Right ventricle myocardium inferior (tissue), 1 donor: ENCODE measurements at regions of chr5 and their contacts with region 1.

Region 1: DNA sequence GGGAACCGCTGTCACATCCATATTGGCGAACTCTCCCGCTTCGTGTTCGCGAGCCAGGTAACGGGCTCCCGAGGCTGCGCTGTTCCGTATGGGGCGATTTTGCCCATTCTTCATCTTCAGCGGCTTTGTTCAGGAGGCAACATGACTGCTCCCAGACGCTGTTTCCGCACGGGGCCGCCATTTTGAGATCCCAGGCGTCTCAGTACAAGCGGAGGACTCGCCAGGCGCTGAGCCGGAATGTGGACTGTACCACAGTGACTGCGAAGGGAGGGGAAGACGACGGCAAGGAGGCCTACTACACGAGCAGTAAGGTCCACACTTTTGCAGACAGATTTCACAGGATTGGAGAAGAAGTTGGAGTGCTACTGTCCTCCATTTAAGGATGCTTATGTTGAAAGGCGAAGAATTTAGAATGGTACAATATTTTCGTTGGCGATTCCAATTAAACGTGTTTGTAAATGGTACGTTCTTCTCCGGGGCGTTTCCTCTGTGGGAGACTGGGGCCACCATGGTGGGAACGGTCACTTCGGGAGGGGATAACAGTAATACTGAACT is 41.6 kb upstream of the ZNF300 start:
- DNase-seq: peak; percentile 90
- ATAC-seq: peak; percentile 98

Region 2: GRCh38 chr5:149834246-149834855 is 1112.1 kb before region 1 on chr5:
- intact Hi-C with region 1: no loop called
- DNase-seq: no peak
- ATAC-seq: peak; percentile 37

Region 3: DNA sequence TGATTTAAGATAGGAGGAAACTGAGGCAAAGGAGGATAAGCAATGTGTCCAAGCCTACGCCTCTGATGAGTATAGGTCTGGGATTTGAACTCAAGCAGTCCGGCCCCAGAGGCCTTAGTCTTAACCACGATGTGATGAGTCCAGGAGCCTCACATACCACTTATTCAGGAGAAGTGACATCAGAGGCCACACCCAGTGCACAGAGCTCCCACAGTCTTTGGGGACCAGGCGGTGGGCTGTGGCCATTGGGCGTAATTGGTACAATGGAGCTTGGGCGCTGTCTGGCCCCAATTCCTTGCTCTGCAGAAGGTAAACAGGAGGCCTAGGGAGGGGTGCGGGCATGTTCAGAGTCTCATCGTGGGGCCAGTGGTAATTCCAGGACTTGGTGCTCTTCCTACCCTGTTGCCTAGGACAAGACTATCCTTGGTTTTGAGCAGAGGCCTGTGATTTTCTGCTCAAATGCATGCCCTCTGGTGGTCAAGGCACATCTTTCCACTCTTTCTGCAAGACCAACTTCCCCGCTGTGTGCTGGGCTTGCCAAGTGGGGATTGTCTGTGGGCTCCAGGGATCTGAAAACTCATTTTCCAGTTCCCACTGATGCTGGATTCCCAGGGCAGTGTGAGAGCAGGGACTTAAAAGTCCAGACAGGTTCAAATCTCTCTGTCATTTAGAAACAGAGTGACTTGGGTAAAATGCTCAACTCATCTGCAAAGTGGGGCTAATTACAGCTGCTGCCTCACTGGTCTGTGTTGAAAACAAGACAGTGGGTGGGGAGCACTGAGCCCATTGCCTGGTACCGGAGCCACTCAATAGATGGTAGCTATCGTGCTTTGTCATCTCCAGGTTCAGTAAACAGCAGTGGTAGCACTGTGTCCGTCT is 422.7 kb before region 1 on chr5:
- intact Hi-C with region 1: no loop called
- DNase-seq: no peak
- ATAC-seq: peak; percentile 43

Region 4: DNA sequence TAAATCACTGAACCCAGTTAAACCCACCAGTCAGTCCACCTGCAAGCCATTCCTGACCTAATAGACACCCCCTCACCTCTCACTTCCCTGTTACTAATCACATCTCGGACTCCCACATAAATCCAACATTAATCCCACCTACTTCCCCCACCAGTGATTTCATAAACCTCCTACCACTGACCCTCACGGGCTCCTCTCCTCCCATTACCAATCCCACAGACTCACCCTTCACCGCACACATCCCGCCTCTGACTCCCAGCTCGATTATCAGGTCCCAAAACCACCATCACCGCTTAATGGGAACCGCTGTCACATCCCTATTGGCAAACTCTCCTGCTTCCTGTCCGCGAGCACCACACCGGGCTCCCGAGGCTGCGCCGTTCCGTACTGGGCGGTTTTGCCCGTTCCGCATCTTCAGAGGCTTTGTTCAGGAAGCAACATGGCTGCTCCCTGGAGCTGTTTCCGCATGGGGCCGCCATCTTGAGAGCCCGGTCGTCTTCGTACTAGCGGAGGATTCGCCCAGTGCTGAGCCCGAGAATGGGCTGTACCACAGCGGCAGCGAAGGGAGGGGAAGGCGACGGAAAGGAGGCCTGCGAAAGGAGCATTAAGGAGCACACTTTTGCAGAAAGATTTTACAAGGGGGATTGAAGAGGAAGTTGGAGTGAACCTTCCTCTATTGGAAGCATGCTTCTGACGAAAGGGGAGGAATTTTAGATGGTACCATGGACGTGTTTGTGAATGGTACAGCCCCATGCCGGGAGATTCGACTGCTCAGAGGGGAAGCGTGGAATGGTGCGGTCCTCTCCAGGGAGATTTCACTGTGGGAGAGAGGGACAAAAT is 41.7 kb before region 1 on chr5 and contains the start of gene ZNF300:
- intact Hi-C with region 1: loop called (anchors 2 kb)
- DNase-seq: peak; percentile 89
- ATAC-seq: peak; percentile 100
- total RNA-seq, gene ZNF300: 0.76 TPM

Region 5: GRCh38 chr5:151005950-151006576 is 59.6 kb after region 1 on chr5:
- intact Hi-C with region 1: no loop called
- DNase-seq: peak; percentile 88
- ATAC-seq: peak; percentile 88